OCI-LY7 (cell line): ENCODE measurements at regions of chr2 and their contacts with region 1.

Region 1: GRCh38 chr2:44087036-44087713 is 81.5 kb upstream of the PPM1B start:
- DNase-seq: peak; percentile 86
- H3K4me3 ChIP-seq: peak overlapping the region; percentile 56
- H3K27ac ChIP-seq: no peak overlapping the region
- H3K4me1 ChIP-seq: peaks cover 27% of the 10 kb centered on the region
- CTCF ChIP-seq: peak; percentile 92

Region 2: GRCh38 chr2:44167940-44168680 is 80.9 kb after region 1 on chr2:
- CTCF ChIA-PET with region 1: no interaction called
- POLR2A ChIA-PET with region 1: no interaction called
- intact Hi-C with region 1: loop called (anchors 1 kb)
- DNase-seq: peak; percentile 99
- H3K4me3 ChIP-seq: peak overlapping the region; percentile 69
- H3K27ac ChIP-seq: peak overlapping the region; percentile 83
- H3K4me1 ChIP-seq: peaks cover 16% of the 10 kb centered on the region
- CTCF ChIP-seq: no peak

Region 3: GRCh38 chr2:44244129-44244871 is 157.1 kb after region 1 on chr2:
- CTCF ChIA-PET with region 1: no interaction called
- POLR2A ChIA-PET with region 1: no interaction called
- intact Hi-C with region 1: loop called (anchors 2 kb)
- DNase-seq: peak; percentile 79
- H3K4me3 ChIP-seq: peak overlapping the region; percentile 23
- H3K27ac ChIP-seq: no peak overlapping the region
- H3K4me1 ChIP-seq: peaks cover 4% of the 10 kb centered on the region
- CTCF ChIP-seq: peak; percentile 83

Region 4: GRCh38 chr2:44342854-44343253 is 255.7 kb after region 1 on chr2:
- CTCF ChIA-PET with region 1: no interaction called
- POLR2A ChIA-PET with region 1: interaction called, 3 read pairs
- intact Hi-C with region 1: loop called (anchors 5 kb)
- DNase-seq: peak; percentile 44
- H3K4me3 ChIP-seq: no peak overlapping the region
- H3K27ac ChIP-seq: no peak overlapping the region
- H3K4me1 ChIP-seq: no peaks in the 10 kb centered on the region
- CTCF ChIP-seq: peak; percentile 77